ENCODE measurements at regions of chr22 and their contacts with region 1.

Region 1: GRCh38 chr22:48065852-48066251 is 1303.4 kb downstream of the TBC1D22A start:
- DNase-seq: no peak
- H3K4me3 ChIP-seq: no peak overlapping the region
- H3K27ac ChIP-seq: no peak overlapping the region
- H3K4me1 ChIP-seq: no peaks in the 10 kb centered on the region
- H3K27me3 ChIP-seq: no peaks in the 10 kb centered on the region
- CTCF ChIP-seq: no peak

Region 2: DNA sequence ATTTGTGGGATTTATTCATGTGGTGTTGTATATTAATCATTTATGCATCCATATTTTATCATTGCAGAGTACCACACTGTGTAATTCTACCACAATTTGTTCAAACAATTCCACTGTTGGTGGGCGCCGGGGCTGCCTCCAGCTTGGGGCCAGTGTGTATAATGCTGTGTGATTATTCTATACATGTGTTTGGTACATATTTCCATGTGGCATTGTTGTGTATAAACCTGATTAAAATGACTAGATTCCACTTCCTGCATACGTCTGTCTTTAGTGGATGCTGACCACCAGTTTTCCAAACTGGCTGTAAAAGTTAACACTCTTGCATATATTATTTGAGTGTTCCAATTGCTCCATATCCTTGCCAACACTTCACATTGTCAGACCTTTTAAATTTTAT is 89.6 kb before region 1 on chr22:
- CTCF ChIA-PET with region 1: no interaction called
- dilution Hi-C with region 1: loop called (anchors 5 kb)
- in situ Hi-C with region 1: no loop called
- intact Hi-C with region 1: no loop called
- DNase-seq: no peak
- H3K4me3 ChIP-seq: no peak overlapping the region
- H3K27ac ChIP-seq: no peak overlapping the region
- H3K4me1 ChIP-seq: no peaks in the 10 kb centered on the region
- H3K27me3 ChIP-seq: no peaks in the 10 kb centered on the region
- CTCF ChIP-seq: no peak

Region 3: DNA sequence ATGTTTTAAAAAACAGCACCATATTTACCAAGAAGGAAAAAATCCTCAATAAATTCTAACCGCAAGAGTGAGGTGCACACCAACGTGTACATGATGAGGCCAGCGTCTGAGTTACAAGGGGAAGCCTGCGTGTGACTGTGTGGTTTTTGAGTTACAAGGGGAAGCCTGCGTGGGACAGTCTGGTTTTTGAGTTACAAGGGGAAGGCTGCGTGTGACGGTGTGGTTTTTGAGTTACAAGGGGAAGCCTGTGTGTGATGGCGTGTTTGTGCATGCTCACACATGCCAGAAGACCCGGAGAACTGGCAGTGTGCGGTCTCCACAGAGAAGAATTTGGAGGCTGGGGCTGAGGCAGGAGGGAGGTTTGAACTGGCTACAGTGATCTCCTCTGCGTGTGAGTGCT is 73.0 kb after region 1 on chr22:
- CTCF ChIA-PET with region 1: no interaction called
- dilution Hi-C with region 1: no loop called
- in situ Hi-C with region 1: no loop called
- intact Hi-C with region 1: no loop called
- DNase-seq: no peak
- H3K4me3 ChIP-seq: no peak overlapping the region
- H3K27ac ChIP-seq: no peak overlapping the region
- H3K4me1 ChIP-seq: no peaks in the 10 kb centered on the region
- H3K27me3 ChIP-seq: no peaks in the 10 kb centered on the region
- CTCF ChIP-seq: no peak

Region 4: DNA sequence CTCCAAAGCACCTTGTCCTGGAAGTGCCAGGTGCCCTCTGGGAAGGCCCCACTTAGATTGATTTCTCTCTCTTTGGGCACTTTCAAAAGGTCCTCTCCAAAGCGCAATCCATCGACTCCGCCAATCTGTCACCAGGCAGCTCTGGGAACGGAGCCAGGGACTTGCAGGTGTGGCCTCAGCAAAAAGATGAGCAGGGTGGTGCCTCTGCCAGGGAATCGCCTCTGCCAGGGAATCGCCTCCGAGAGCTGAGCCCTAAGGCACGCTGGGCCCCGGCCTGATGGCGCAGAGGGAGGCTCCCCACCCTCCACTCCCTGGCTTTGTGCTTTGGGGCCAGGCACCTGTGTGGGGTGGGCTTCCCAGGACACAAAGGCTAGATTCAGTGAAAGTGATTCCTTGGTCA is 87.9 kb after region 1 on chr22:
- CTCF ChIA-PET with region 1: no interaction called
- dilution Hi-C with region 1: loop called (anchors 5 kb)
- in situ Hi-C with region 1: no loop called
- intact Hi-C with region 1: no loop called
- DNase-seq: no peak
- H3K4me3 ChIP-seq: no peak overlapping the region
- H3K27ac ChIP-seq: no peak overlapping the region
- H3K4me1 ChIP-seq: no peaks in the 10 kb centered on the region
- H3K27me3 ChIP-seq: no peaks in the 10 kb centered on the region
- CTCF ChIP-seq: no peak